Mammary epithelial cell (primary cell): ENCODE measurements at regions of chr3 and their contacts with region 1.

Region 1: DNA sequence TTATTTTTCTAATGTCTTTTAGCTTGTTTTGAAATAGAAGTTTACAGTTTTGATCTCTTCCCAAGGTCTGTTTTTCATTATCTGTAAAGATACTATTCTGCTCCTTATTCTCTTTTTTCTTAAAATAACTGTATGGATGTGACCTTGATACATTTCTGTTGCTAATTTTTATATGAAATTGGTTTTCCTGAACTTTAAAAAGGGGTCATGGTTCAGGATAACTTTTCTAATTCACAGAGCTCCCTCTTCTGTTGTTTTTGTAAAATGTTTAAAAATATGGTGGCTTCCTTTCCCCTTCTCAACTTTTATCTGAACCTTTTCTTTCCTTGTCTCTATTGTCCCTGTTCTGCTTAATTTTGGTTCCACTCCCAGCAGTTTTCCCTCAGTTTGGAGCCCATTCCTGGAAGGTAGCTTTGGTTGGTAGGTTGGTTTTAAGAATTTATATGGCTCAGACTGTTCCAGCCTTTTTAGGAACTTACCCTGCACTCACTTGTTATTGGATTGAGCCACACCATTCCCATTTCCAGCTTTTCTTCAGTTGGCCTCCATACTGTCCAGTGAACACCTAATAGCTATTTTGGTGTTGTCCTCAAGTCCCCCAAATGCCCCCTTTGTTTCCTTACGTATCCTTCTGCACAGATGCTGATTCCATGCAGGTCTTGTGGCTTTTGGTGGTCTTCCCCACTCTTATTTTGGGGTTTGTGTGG is 70.3 kb downstream of the SLMAP start:
- DNase-seq: no peak
- H3K4me3 ChIP-seq: no peak overlapping the region
- H3K27ac ChIP-seq: no peak overlapping the region
- H3K4me1 ChIP-seq: peaks cover 9% of the 10 kb centered on the region
- H3K27me3 ChIP-seq: no peaks in the 10 kb centered on the region
- CTCF ChIP-seq: peak in 1 of 2 donors; percentile 28

Region 2: DNA sequence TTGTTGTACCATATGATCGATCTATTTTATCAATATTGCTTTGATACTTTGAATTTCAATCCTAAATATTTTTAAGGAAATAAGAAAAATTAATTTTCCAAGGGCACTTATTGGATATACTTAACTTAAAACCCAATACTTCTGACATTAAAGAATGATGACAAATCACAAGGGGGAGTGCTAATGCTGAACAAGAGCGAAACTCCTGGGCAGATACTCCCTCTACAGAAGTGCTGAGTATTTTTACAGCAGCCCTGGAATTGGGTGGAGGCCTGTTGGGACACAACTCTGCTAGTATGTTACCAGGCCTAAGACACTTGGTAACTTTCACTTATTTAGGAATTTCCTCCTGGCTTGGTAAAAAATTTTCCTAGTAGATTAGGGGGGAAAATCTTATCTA is 179.7 kb before region 1 on chr3:
- CTCF ChIA-PET with region 1: no interaction called
- dilution Hi-C with region 1: no loop called
- in situ Hi-C with region 1: no loop called
- intact Hi-C with region 1: loop called (anchors 1 kb)
- DNase-seq: peak; percentile 78
- H3K4me3 ChIP-seq: no peak overlapping the region
- H3K27ac ChIP-seq: peak overlapping the region; percentile 29
- H3K4me1 ChIP-seq: peaks cover 3% of the 10 kb centered on the region
- H3K27me3 ChIP-seq: no peaks in the 10 kb centered on the region
- CTCF ChIP-seq: peak in 1 of 2 donors; percentile 44

Region 3: GRCh38 chr3:57942872-57943283 is 116.5 kb after region 1 on chr3:
- CTCF ChIA-PET with region 1: no interaction called
- dilution Hi-C with region 1: no loop called
- in situ Hi-C with region 1: no loop called
- intact Hi-C with region 1: no loop called
- DNase-seq: no peak
- H3K4me3 ChIP-seq: no peak overlapping the region
- H3K27ac ChIP-seq: no peak overlapping the region
- H3K4me1 ChIP-seq: no peaks in the 10 kb centered on the region
- H3K27me3 ChIP-seq: no peaks in the 10 kb centered on the region
- CTCF ChIP-seq: no peak